Activated CD4-positive, alpha-beta T cell treated with anti-CD3 and anti-CD28 coated beads for 36 hours (primary cell): ENCODE measurements at regions of chr2 and their contacts with region 1.

Region 1: DNA sequence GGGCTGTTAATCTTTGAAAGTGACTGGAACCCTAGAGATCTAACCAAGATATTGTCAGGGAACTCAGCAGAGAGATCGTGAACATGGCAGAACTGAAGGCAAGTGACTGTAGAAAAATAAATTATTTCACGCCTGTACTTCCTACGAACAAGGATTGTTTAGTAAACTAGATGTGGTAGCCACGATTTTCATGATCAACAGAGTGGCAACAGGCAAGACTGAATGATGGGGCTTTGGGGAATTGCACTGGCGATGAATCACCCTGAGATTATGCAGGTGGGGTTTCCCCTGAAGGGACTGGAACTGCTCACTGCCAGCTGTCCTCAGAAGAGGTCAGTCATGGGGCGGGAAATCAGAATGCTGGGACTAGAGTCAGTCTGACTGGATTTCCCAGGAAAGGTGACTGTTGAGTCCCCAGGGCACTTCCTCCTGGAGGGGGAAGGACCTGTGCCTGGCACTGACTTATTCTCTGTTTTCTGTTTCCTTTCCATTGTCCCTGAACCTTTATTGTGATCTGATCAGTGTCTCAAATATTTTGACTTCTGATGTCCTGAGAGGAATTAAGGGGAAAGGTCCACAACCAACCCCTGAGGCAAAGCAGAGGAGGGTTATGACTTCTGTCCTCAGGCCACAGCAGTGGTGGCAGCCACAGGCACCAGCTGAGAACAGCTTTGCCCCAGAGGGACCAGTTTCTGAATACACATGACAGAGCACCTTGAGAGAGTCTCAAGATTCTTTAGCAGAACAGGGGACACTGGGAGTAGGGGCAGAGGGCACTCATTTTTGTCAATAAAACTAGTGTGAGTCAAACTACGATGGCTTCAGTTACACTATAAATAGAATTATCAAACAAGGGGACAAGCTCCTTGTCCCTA is 70.0 kb downstream of the NAB1 start:
- DNase-seq: peak; percentile 86
- ATAC-seq: peak; percentile 64
- H3K4me3 Mint-ChIP-seq: peak overlapping the region; percentile 16
- H3K27ac Mint-ChIP-seq: peak overlapping the region; percentile 86
- H3K4me1 Mint-ChIP-seq: peaks cover 73% of the 10 kb centered on the region
- H3K27me3 Mint-ChIP-seq: no peaks in the 10 kb centered on the region

Region 2: GRCh38 chr2:190408538-190409271 is 310.2 kb before region 1 on chr2:
- CTCF ChIA-PET with region 1: no interaction called
- POLR2A ChIA-PET with region 1: no interaction called
- intact Hi-C with region 1: loop called in 1 of 2 experiments (anchors 2 kb)
- DNase-seq: peak; percentile 82
- ATAC-seq: peak; percentile 50
- H3K4me3 Mint-ChIP-seq: peak overlapping the region; percentile 81
- H3K27ac Mint-ChIP-seq: peak overlapping the region; percentile 90
- H3K4me1 Mint-ChIP-seq: peaks cover 45% of the 10 kb centered on the region
- H3K27me3 Mint-ChIP-seq: no peaks in the 10 kb centered on the region

Region 3: GRCh38 chr2:190477661-190478454 is 241.0 kb before region 1 on chr2:
- CTCF ChIA-PET with region 1: no interaction called
- POLR2A ChIA-PET with region 1: no interaction called
- intact Hi-C with region 1: no loop called
- DNase-seq: no peak
- ATAC-seq: no peak
- H3K4me3 Mint-ChIP-seq: no peak overlapping the region
- H3K27ac Mint-ChIP-seq: no peak overlapping the region
- H3K4me1 Mint-ChIP-seq: peaks cover 5% of the 10 kb centered on the region
- H3K27me3 Mint-ChIP-seq: no peaks in the 10 kb centered on the region

Region 4: DNA sequence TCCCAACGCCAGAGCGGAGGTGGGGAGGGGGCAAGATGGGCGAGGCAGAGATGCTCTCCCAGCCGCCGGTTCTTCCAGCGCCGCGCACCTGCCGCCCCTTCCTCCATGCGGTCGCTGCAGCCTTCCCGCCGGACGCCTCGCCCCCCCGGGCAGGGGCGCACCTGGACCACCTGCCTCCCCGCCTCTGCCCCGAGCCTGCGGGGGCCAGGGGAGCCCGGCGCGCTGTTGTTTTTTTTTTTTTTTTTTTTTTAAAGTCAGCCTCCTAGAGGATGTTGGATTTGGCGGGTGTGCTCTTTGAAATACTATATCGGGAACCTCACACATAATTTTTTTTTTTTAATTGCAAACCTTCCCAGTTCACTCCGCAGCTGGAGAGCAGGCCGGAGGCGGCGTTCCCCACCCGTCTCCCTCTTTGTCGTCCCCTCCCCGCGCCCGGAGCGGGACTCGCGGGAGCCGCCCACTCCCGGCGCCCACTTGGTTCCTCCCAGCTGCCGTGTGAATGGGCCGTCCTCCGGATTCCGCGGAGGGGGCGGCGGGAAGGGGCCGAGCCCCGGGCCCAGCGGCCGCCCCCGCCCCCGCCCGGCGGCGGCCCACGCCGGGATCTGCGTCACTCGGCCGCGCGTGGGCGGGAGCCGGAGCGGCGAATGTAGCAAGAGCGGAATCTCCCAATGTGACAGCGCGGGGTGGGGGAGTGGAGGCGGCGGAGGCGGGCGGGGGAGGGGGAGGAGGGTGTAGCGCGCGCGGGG is 70.4 kb before region 1 on chr2:
- CTCF ChIA-PET with region 1: interaction called, 3 read pairs
- POLR2A ChIA-PET with region 1: interaction called, 3 read pairs
- intact Hi-C with region 1: loop called (anchors 1 kb)
- DNase-seq: peak; percentile 88
- ATAC-seq: peak; percentile 54
- H3K4me3 Mint-ChIP-seq: peak overlapping the region; percentile 67
- H3K27ac Mint-ChIP-seq: peak overlapping the region; percentile 81
- H3K4me1 Mint-ChIP-seq: peaks cover 46% of the 10 kb centered on the region
- H3K27me3 Mint-ChIP-seq: no peaks in the 10 kb centered on the region

Region 5: GRCh38 chr2:190707726-190708125 is 11.2 kb before region 1 on chr2:
- CTCF ChIA-PET with region 1: interaction called, 7 read pairs
- POLR2A ChIA-PET with region 1: no interaction called
- intact Hi-C with region 1: loop called in 1 of 2 experiments (anchors 1 kb)
- DNase-seq: no peak
- ATAC-seq: peak; percentile 82
- H3K4me3 Mint-ChIP-seq: no peak overlapping the region
- H3K27ac Mint-ChIP-seq: peak overlapping the region; percentile 59
- H3K4me1 Mint-ChIP-seq: peaks cover 35% of the 10 kb centered on the region
- H3K27me3 Mint-ChIP-seq: no peaks in the 10 kb centered on the region

Region 6: DNA sequence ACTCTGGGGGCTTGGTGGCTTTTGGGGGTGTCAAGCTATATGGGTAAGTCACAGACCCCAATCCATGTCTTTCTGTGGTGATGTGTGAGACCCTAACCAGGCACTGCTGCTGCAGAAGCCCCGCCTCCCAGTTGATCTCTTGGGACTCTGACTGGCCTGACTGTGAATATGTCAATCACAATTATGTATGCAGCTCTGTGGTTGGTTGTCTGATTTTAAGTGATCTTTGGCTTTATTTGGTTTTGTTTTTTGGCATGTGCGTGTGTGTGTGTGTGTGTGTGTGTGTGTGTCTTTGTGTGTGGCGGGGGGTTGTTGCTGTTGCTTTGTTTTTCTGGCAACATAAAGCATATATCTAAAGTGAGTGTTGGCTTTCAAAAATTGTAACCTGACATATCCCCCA is 83.2 kb after region 1 on chr2:
- CTCF ChIA-PET with region 1: no interaction called
- POLR2A ChIA-PET with region 1: no interaction called
- intact Hi-C with region 1: no loop called
- DNase-seq: no peak
- ATAC-seq: no peak
- H3K4me3 Mint-ChIP-seq: no peak overlapping the region
- H3K27ac Mint-ChIP-seq: no peak overlapping the region
- H3K4me1 Mint-ChIP-seq: peaks cover 5% of the 10 kb centered on the region
- H3K27me3 Mint-ChIP-seq: no peaks in the 10 kb centered on the region

Region 7: DNA sequence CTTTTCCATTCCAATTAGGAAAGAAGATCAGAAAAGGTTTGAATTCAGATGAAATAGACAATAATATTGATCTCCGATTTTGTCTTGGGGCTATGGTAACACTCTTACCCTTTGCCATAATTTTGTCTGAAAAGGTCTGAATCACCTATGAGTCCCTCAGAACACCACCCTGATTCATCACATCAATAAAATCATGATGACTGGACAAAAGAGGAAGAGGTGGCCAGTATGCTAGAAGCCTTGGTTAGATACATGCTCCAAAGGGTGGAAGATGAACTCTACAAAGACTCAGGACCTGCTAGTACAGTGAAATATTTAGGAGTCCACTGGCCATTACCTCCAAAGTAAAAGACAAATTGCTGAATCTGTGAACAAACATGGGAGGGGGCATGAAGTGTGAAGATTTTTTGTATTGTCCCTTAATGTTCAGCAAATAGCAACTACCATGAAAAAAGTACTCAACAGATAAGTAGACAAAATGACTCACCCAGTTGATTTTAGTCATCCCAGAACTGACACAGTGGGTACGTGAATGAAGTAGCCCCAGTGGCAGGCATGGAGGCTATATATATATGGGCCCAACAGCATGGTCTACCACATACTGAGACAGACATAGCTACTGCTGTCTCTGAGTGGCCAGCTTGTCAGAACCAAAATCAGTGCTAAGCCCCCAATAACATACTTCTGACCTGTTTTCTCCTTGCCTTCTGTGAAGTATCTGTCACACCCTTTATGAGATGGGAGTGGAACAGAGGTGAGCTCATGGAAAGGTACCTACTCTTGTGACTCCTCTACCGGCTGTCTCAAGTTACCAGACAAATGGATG is 125.2 kb after region 1 on chr2:
- CTCF ChIA-PET with region 1: interaction called, 4 read pairs
- POLR2A ChIA-PET with region 1: interaction called, 5 read pairs
- intact Hi-C with region 1: loop called (anchors 1 to 5 kb)
- DNase-seq: peak; percentile 74
- ATAC-seq: peak; percentile 87
- H3K4me3 Mint-ChIP-seq: peak overlapping the region; percentile 43
- H3K27ac Mint-ChIP-seq: peak overlapping the region; percentile 82
- H3K4me1 Mint-ChIP-seq: peaks cover 45% of the 10 kb centered on the region
- H3K27me3 Mint-ChIP-seq: no peaks in the 10 kb centered on the region

Region 8: DNA sequence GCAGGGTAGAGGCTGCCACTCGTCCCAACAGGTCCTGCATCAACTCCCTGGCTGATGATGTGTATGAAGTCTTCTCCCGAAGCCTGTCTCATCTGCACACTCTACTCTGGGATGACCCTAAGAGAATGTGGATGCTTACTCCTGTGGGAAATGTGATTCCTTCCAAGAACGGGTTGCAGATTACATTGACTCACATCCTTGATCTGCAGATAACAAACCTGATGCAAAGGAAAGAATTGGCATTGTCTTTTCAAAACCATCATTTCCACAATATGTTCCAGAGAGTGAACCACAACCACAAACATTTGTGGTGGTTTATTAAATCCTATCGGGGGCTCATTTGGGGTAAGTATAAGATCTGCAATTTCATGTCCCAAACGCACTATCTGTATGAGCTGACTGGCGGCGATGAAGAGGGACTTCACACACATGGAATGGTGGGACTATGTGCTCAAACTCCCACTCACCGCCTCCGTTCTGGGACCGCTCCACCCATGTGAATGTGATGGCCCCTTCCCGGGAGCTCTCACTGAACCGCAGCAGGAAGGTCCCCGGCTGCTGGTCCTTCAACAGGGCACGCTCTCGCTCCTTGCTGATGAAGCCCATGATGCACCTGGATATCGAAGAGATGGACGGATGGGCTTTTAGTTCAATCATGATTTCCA is 259.6 kb after region 1 on chr2:
- CTCF ChIA-PET with region 1: no interaction called
- POLR2A ChIA-PET with region 1: no interaction called
- intact Hi-C with region 1: no loop called
- DNase-seq: no peak
- ATAC-seq: no peak
- H3K4me3 Mint-ChIP-seq: no peak overlapping the region
- H3K27ac Mint-ChIP-seq: peak overlapping the region; percentile 74
- H3K4me1 Mint-ChIP-seq: peaks cover 57% of the 10 kb centered on the region
- H3K27me3 Mint-ChIP-seq: no peaks in the 10 kb centered on the region

Region 9: GRCh38 chr2:191114403-191114886 is 395.6 kb after region 1 on chr2:
- CTCF ChIA-PET with region 1: no interaction called
- POLR2A ChIA-PET with region 1: no interaction called
- intact Hi-C with region 1: loop called (anchors 5 kb)
- DNase-seq: peak; percentile 49
- ATAC-seq: peak; percentile 22
- H3K4me3 Mint-ChIP-seq: peak overlapping the region; percentile 30
- H3K27ac Mint-ChIP-seq: peak overlapping the region; percentile 82
- H3K4me1 Mint-ChIP-seq: peaks cover 62% of the 10 kb centered on the region
- H3K27me3 Mint-ChIP-seq: no peaks in the 10 kb centered on the region